Right ventricle myocardium superior (tissue), 1 donor: ENCODE measurements at regions of chr10 and their contacts with region 1.

Region 1: DNA sequence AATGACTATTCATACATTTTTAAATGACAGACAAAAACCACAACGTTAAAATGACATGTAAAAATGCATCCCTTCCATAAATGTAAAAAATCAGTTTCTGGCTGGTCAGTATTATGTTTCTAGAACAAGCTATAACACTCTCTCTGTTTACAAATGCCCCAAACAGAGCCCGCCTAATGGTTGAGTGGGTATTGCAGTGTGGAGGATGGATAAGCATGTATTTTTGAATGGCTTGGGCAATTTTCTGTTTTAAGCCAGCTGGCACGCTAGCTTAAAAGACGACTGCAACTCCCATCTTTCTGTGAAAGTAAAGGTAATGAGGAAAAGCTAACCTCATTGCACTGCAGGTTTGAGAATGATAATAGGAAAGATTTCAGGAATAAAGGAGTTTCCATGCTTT is 430.7 kb downstream of the PARD3 start:
- DNase-seq: no peak
- ATAC-seq: no peak

Region 2: GRCh38 chr10:33398796-33399195 is 985.6 kb before region 1 on chr10:
- intact Hi-C with region 1: loop called (anchors 5 kb)
- DNase-seq: no peak
- ATAC-seq: no peak

Region 3: DNA sequence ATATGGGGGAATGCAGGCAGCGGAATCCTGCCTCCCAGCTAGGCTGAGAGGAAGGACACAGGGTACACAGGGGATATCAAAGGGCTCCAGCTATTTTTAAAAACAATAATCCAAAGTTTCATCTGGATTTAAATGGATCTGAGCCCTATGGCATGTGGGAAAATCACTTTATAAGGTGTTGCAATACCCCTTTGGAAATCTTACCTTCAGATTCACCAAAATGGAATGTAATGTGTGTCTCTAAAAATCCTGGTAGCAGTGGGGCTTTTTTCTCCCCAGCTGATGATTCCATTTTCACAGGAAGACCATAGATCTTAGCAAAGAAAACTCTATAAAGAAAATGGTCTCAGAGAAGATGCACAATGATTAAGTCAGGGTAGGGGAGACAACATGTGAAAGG is 291.5 kb before region 1 on chr10:
- intact Hi-C with region 1: no loop called
- DNase-seq: no peak
- ATAC-seq: no peak